Left cardiac atrium (tissue), 4 donors: ENCODE measurements at regions of chr1 and their contacts with region 1.

Region 1: DNA sequence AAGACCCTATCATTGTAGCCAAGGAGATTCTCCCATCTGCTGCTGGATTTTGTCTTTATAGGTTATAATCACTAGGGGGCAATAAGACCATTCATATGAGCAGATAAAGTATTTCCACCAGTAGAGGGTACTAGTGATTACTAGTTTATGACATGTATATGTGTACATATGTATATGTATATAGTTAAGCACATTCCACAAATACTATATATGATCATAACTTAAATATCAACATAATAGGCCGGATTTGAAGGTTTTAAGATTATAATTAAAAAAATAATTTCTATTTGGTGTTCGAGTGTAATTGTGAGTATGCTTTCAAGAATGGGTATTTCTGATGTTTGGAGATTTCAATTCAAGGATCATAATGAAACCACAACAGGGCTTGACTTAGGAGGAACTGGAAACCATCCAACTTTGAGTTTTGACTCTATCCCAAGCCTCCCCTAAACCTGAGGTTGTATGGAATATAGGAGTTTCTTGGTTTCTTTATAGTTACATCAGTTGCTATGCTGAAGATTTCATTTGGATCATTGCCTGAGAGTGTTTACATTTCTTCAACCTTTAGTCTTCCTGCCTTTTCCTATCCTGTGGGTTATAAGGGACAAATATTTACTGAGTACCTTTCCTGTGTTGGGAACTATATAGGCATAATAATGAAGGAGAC is 16.9 kb downstream of the TCEANC2 start:
- DNase-seq: no peak
- ATAC-seq: peak; percentile 71 to 78

Region 2: GRCh38 chr1:54001591-54001990 is 68.7 kb before region 1 on chr1:
- intact Hi-C with region 1: no loop called
- DNase-seq: no peak
- ATAC-seq: no peak

Region 3: DNA sequence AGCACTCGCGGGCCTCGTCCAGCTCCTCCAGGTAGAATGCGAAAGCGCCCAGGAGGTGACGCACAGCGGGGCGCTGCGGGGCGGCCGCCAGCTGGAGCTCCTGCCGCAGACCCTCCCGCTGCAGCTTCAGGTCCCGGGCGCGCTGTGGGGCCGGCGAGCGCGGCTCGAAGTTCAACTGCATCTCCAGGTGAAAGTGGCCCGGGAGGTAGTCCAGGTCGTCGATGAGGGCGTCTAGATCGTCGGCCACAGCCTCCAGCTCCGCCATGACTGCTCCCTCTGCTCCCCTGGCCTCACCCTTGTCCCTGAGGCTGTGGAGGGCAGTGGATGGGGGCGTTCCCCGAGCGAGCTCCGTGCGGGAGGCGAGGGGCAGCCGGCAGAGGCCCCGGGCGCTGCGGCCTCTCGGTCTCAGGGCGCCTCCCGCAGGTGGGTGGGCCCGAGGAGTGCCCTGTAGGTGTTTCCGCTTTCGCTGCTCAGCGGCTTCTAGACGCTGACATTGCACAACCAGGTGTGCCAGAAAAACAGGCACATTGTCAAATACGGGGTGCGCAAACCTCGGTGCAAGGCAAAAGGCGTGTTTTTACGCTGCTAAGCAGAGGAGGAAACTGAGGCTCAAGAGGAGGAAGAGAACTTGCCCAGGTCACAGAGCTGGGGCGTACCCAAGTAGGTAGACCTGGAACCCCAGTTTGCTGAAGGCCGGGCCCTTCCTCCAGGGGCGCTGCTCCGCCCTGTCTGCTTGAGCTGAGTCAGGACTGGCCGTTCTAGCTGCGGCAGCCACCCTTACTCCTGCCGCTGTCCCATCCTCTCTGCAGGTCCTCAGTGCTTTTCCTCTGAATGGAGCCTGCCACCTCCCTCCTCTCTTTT is 730.8 kb after region 1 on chr1 and contains the start of gene TTC22:
- intact Hi-C with region 1: loop called in 1 of 2 experiments (anchors 10 kb)
- DNase-seq: no peak
- ATAC-seq: peak; percentile 68 to 75
- total RNA-seq, gene TTC22: 0.31 to 0.47 TPM